ENCODE measurements at regions of chr1 and their contacts with region 1.

Region 1: GRCh38 chr1:186806477-186806876 is 22.3 kb upstream of the PLA2G4A start:
- DNase-seq: no peak
- ATAC-seq: no peak

Region 2: GRCh38 chr1:186550832-186551231 is 255.6 kb before region 1 on chr1:
- intact Hi-C with region 1: no loop called
- DNase-seq: no peak
- ATAC-seq: no peak

Region 3: DNA sequence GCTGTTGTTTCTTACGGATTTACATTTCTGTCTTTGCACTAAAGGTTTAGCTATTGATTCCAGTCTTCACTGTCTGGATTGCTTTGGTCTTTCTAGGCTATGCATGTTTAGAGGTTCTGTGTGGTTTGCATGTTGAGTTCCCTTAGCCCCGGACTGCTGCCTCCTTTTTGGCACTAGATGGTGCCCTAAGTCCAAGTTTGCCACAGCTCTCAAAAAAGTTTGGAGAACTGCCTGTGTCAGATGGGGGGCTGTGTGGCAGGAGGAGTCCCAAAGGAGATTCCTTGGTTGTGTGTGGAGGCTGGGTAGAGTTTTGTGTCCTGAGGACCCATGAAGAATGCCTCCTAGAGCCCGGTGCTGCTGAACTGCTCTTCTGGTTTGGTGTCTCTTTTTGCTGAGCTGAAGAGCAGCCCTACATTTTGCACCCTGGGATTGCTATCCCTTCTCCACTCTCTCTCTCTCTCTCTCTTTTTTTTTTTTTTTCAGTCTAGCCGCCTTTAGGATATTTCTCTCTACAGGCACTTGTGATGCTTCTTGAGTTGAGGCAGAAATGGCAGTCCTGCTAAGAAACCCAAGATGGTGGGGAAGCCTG is 200.6 kb before region 1 on chr1:
- intact Hi-C with region 1: loop called (anchors 5 kb)
- DNase-seq: no peak
- ATAC-seq: peak; percentile 48